ENCODE measurements at regions of chr10 and their contacts with region 1.

Region 1: DNA sequence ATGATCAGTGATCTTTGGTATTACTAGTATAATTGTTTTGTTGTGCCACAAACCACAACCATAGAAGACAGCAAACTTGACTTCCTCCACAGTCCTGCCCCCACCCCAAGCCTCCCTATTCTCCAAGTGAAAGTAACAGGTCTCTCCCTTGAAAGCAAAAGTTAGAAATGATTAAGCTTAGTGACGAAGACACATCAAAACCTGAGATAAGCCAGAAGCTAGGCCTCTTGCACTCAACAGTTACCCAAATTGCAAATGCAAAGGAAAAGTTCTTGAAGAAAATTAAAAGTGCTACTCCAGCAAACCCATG is 7.5 kb downstream of the SAR1A start:
- DNase-seq: peak; percentile 82
- H3K4me3 Mint-ChIP-seq: peak overlapping the region; percentile 40
- H3K27ac Mint-ChIP-seq: peak overlapping the region; percentile 93
- H3K4me1 Mint-ChIP-seq: peaks cover 69% of the 10 kb centered on the region
- H3K27me3 Mint-ChIP-seq: no peaks in the 10 kb centered on the region

Region 2: DNA sequence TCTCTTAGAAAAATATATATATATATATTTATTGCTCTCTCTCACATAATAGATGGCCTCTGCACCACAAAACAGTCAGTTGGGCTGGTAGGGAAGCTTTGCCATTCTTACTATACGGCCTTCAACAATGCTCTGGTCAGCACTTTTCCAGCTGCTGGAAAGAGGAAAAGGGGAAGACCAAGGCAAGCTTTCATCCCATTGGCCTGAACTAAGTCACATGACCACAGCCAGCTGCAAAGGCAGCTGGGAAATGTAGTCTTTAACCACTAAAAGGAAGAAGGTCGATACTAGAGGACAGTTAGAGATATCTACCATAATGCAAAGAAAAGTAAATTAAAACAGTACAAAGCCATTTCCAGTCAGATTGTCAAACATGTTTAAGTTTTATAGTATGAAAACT is 168.6 kb before region 1 on chr10:
- CTCF ChIA-PET with region 1: no interaction called
- POLR2A ChIA-PET with region 1: no interaction called
- intact Hi-C with region 1: no loop called
- DNase-seq: peak; percentile 18
- H3K4me3 Mint-ChIP-seq: no peak overlapping the region
- H3K27ac Mint-ChIP-seq: no peak overlapping the region
- H3K4me1 Mint-ChIP-seq: no peaks in the 10 kb centered on the region
- H3K27me3 Mint-ChIP-seq: peaks cover 12% of the 10 kb centered on the region

Region 3: DNA sequence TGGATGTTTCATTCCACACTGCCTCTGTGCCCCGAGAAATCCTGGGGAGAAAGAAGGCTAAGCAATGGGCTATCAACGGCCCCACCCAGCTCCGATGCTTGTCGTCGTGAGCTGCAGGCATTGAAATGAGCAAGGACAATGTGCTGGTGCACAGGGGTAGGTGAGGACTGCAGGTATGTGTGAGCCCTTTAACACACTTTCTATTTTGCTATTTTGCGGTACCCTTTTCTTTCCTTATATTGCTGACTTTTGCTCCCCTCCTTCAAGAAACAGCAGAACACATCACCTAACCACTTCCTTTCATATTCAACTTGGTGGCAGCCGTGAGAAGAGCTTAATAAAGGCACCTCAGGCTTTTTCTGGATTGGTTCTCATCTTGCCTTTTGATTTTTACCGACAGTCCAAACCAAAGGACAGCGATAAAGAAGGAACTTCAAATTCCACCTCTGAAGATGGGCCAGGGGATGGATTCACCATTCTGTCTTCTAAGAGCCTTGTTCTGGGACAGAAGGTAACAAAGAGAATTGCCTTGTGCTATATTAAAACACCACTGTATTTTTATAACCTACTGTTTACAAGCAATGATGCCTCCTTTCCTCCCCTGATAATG is 69.4 kb before region 1 on chr10:
- CTCF ChIA-PET with region 1: no interaction called
- POLR2A ChIA-PET with region 1: no interaction called
- intact Hi-C with region 1: loop called (anchors 5 kb)
- DNase-seq: peak; percentile 51
- H3K4me3 Mint-ChIP-seq: peak overlapping the region; percentile 58
- H3K27ac Mint-ChIP-seq: peak overlapping the region; percentile 7
- H3K4me1 Mint-ChIP-seq: peaks cover 34% of the 10 kb centered on the region
- H3K27me3 Mint-ChIP-seq: no peaks in the 10 kb centered on the region

Region 4: GRCh38 chr10:70201105-70201504 is 38.3 kb after region 1 on chr10:
- CTCF ChIA-PET with region 1: no interaction called
- POLR2A ChIA-PET with region 1: no interaction called
- intact Hi-C with region 1: loop called (anchors 5 kb)
- DNase-seq: no peak
- H3K4me3 Mint-ChIP-seq: no peak overlapping the region
- H3K27ac Mint-ChIP-seq: peak overlapping the region; percentile 49
- H3K4me1 Mint-ChIP-seq: peaks cover 19% of the 10 kb centered on the region
- H3K27me3 Mint-ChIP-seq: no peaks in the 10 kb centered on the region

Region 5: DNA sequence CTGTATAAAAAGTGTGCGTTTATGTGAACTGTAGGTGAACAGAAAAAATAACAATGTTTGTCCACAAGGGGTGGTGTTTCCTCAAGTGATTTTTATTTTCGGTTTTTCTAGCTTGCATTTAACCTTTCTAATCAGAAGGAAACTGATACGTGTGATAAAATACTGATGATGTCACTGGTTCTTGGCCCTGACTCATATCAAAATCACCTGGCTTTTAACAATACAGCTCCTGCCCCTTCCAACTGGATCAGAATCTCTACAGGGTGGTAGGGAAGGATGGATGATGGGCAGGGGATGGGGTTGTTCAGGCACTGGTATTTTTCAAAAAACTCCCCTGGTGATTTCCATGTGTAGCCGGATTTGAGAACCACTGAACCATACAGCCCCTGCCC is 110.1 kb after region 1 on chr10:
- CTCF ChIA-PET with region 1: no interaction called
- POLR2A ChIA-PET with region 1: no interaction called
- intact Hi-C with region 1: loop called (anchors 5 kb)
- DNase-seq: peak; percentile 24
- H3K4me3 Mint-ChIP-seq: no peak overlapping the region
- H3K27ac Mint-ChIP-seq: peak overlapping the region; percentile 56
- H3K4me1 Mint-ChIP-seq: peaks cover 26% of the 10 kb centered on the region
- H3K27me3 Mint-ChIP-seq: no peaks in the 10 kb centered on the region